Activated B cell treated with CpG ODN at 0.5 μM for 24 hours (primary cell): ENCODE measurements at regions of chr17 and their contacts with region 1.

Region 1: DNA sequence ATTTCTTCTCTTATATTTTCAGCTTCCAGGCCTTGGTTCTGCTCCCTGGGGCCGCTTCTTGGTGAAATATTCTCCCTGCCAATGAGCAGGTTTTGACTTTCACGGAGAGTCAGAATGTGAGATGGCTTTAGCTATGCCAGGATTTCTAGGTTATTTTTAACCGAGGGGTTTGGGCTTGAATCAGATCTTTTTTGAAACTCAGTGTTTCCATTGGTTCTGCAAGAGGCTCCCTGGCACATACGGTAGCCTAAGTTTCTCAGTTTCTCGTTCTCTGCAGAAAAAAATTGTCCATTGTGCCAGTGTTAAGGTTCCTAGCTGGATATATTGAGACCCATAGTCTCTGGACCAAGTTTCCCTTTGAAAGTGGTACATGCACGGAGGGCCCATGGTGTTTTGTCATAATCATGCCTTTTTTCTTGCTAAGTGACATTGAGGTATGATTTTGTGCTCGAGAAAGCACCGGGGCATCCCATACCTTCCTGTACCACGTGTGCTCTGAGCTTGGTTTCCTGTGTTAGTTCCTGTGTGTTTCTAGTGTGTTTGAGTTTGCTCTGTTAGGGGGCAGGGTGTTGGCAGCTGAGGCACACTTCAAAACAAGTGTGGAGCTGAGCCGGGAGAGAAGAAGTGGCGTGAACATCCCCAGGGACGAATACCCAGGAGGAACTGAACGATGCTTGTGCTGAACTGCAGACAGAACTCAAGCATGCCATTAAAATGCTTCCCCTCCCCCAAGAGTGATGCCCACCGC is 127.2 kb downstream of the HS3ST3B1 start:
- DNase-seq: peak; percentile 37
- ATAC-seq: peak; percentile 86
- H3K4me3 Mint-ChIP-seq: peak overlapping the region; percentile 75
- H3K27ac Mint-ChIP-seq: peak overlapping the region; percentile 87
- H3K4me1 Mint-ChIP-seq: peaks cover 50% of the 10 kb centered on the region
- H3K27me3 Mint-ChIP-seq: no peaks in the 10 kb centered on the region
- CTCF ChIP-seq: no peak

Region 2: GRCh38 chr17:14069251-14070021 is 358.6 kb before region 1 on chr17 and contains the start of gene COX10:
- CTCF ChIA-PET with region 1: no interaction called
- POLR2A ChIA-PET with region 1: interaction called, 4 read pairs
- intact Hi-C with region 1: loop called (anchors 5 kb)
- DNase-seq: peak; percentile 87
- ATAC-seq: peak; percentile 98
- H3K4me3 Mint-ChIP-seq: peak within 1 kb of the TSS; percentile 97
- H3K27ac Mint-ChIP-seq: peak within 1 kb of the TSS; percentile 90
- H3K4me1 Mint-ChIP-seq: peaks cover 33% of the 10 kb centered on the region
- H3K27me3 Mint-ChIP-seq: no peaks in the 10 kb centered on the region
- CTCF ChIP-seq: no peak
- total RNA-seq, gene COX10: 19.4 and 20.8 TPM in 2 replicates

Region 3: DNA sequence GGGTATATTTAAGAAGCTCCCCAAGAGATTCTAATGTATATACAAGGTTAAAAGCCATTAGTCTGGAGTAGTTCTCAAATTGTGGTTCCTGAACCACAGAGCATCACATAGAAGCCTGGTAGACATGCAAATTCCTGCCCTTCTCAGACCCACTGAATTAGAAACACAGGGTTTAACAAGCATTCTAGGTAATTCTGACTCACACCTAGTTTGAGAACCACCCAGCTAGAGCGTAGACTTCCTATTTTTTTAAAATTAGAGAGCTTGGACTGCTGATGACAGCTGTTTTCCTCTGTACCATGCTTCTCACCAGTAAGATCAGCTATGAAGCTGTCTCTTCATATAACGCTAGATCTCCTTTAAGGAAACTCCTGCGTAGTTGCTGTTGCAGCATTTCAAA is 76.6 kb before region 1 on chr17:
- CTCF ChIA-PET with region 1: interaction called, 7 read pairs
- POLR2A ChIA-PET with region 1: interaction called, 10 read pairs
- intact Hi-C with region 1: loop called (anchors 1 kb)
- DNase-seq: no peak
- ATAC-seq: peak; percentile 97
- H3K4me3 Mint-ChIP-seq: peak overlapping the region; percentile 32
- H3K27ac Mint-ChIP-seq: peak overlapping the region; percentile 63
- H3K4me1 Mint-ChIP-seq: peaks cover 41% of the 10 kb centered on the region
- H3K27me3 Mint-ChIP-seq: peaks cover 21% of the 10 kb centered on the region
- CTCF ChIP-seq: no peak

Region 4: GRCh38 chr17:14446825-14447224 is 18.8 kb after region 1 on chr17:
- CTCF ChIA-PET with region 1: no interaction called
- POLR2A ChIA-PET with region 1: interaction called, 9 read pairs
- intact Hi-C with region 1: loop called (anchors 2 kb)
- DNase-seq: no peak
- ATAC-seq: no peak
- H3K4me3 Mint-ChIP-seq: no peak overlapping the region
- H3K27ac Mint-ChIP-seq: no peak overlapping the region
- H3K4me1 Mint-ChIP-seq: peaks cover 24% of the 10 kb centered on the region
- H3K27me3 Mint-ChIP-seq: peaks cover 5% of the 10 kb centered on the region
- CTCF ChIP-seq: no peak

Region 5: GRCh38 chr17:14605267-14605599 is 177.2 kb after region 1 on chr17:
- CTCF ChIA-PET with region 1: no interaction called
- POLR2A ChIA-PET with region 1: no interaction called
- intact Hi-C with region 1: loop called (anchors 1 kb)
- DNase-seq: no peak
- ATAC-seq: peak; percentile 91
- H3K4me3 Mint-ChIP-seq: peak overlapping the region; percentile 53
- H3K27ac Mint-ChIP-seq: peak overlapping the region; percentile 74
- H3K4me1 Mint-ChIP-seq: peaks cover 20% of the 10 kb centered on the region
- H3K27me3 Mint-ChIP-seq: no peaks in the 10 kb centered on the region
- CTCF ChIP-seq: no peak